ENCODE measurements at regions of chr15 and their contacts with region 1.

Region 1: DNA sequence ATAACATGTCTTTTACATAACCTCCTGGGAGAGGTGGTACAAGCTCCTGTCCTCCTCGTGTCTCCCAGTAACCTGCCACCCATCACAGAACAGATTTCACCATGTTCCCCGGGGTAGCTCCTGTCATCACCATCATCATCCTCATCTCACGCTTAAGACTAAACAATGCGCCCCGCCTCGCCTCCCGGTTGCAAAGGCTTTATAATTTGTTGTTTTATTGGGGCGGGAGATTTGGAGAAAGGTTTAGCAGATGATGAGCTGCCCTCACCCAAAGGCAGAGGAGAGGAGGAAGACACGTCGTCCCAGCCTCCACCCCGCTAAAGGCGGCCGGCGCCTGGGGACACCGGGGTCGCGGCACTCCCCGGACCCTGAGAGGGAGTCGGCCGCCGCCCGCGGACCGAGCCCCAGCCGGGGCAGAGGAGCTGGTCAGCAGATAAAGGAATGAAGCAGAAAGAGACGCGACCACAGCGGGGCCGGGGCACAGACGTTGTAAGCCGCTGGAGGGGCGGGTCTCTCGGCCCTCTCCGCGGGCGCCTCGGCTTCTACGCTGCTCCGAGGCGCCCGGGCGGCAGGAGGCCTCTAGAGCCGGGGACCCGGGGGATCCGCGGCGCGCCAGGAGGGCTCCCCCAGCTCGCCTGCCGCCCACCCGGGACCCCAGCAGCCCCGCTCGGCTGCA is 589 bp downstream of the HERC1 start:
- DNase-seq: peak; percentile 70
- ATAC-seq: peak; percentile 69
- H3K4me3 Mint-ChIP-seq: peak overlapping the region; percentile 91
- H3K27ac Mint-ChIP-seq: peak overlapping the region; percentile 91
- H3K4me1 Mint-ChIP-seq: peaks cover 31% of the 10 kb centered on the region
- H3K27me3 Mint-ChIP-seq: peaks cover 12% of the 10 kb centered on the region

Region 2: GRCh38 chr15:63626955-63627354 is 206.2 kb before region 1 on chr15:
- POLR2A ChIA-PET with region 1: no interaction called
- DNase-seq: no peak
- ATAC-seq: no peak
- H3K4me3 Mint-ChIP-seq: no peak overlapping the region
- H3K27ac Mint-ChIP-seq: no peak overlapping the region
- H3K4me1 Mint-ChIP-seq: peaks cover 1% of the 10 kb centered on the region
- H3K27me3 Mint-ChIP-seq: no peaks in the 10 kb centered on the region

Region 3: DNA sequence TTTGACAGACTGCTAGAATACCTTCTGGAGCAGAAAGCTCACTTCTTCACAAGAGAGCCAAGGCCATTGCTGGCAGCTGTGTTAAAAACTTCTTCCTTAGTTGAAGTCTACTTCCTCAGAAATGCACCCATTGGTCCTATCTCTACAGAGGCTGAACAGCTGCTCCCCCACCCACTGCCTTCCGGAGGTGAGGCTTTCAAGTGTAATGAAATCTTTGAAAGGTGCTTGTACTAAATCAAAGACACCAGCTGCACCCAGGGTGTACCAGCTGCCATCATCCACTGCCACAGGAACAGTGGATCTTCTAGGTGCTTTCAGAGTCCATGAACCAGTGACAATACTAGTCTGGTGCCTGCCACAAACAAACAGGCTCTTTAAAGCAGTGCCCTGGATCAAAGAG is 27.0 kb after region 1 on chr15:
- POLR2A ChIA-PET with region 1: interaction called, 10 read pairs
- DNase-seq: peak; percentile 57
- ATAC-seq: peak; percentile 94
- H3K4me3 Mint-ChIP-seq: peak overlapping the region; percentile 57
- H3K27ac Mint-ChIP-seq: peak overlapping the region; percentile 91
- H3K4me1 Mint-ChIP-seq: peaks cover 25% of the 10 kb centered on the region
- H3K27me3 Mint-ChIP-seq: no peaks in the 10 kb centered on the region

Measured in activated naive CD8-positive, alpha-beta T cell treated with anti-CD3 and anti-CD28 coated beads, Interleukin-2, amount 10 ng/mL, durations not matched to agents 7 days and 5 days (primary cell).